ENCODE measurements at regions of chr3 and their contacts with region 1.

Region 1: GRCh38 chr3:141011232-141011996 is 39.7 kb upstream of the SPSB4 start:
- DNase-seq: peak; percentile 67
- CTCF ChIP-seq: peak; percentile 92

Region 2: DNA sequence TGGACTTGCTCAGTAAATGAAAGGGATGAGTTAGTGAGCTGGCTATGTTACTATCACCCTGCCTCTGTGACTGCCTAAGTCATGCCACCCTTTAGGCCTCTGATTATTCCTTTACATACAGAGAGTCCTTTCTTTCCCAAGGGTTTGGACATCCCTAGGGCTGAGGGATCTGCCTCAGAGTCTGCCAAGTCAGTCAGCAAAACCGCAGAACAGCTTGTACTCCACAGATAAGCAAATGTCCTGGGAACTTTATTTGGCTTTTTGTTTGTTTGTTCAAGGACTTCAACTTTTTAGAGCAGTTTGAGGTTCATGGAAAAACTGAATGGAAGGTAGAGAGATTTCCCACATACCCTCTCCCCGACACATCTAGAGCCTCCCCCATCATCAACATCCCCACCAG is 416.1 kb before region 1 on chr3:
- in situ Hi-C with region 1: no loop called
- DNase-seq: no peak
- CTCF ChIP-seq: no peak

Region 3: GRCh38 chr3:141192345-141192744 is 180.9 kb after region 1 on chr3:
- in situ Hi-C with region 1: loop called (anchors 25 kb)
- DNase-seq: peak; percentile 75
- CTCF ChIP-seq: peak; percentile 93